ENCODE measurements at regions of chr14 and their contacts with region 1.

Region 1: GRCh38 chr14:103833711-103834110 is 13.7 kb downstream of the PPP1R13B start:
- DNase-seq: no peak
- ATAC-seq: no peak
- H3K4me3 ChIP-seq: no peak overlapping the region
- H3K4me3 Mint-ChIP-seq: no peak overlapping the region
- H3K27ac ChIP-seq: no peak overlapping the region
- H3K27ac Mint-ChIP-seq: no peak overlapping the region
- H3K4me1 ChIP-seq: no peaks in the 10 kb centered on the region
- H3K4me1 Mint-ChIP-seq: peaks cover 4% of the 10 kb centered on the region
- H3K27me3 ChIP-seq: no peaks in the 10 kb centered on the region
- H3K27me3 Mint-ChIP-seq: no peaks in the 10 kb centered on the region
- CTCF ChIP-seq: no peak

Region 2: DNA sequence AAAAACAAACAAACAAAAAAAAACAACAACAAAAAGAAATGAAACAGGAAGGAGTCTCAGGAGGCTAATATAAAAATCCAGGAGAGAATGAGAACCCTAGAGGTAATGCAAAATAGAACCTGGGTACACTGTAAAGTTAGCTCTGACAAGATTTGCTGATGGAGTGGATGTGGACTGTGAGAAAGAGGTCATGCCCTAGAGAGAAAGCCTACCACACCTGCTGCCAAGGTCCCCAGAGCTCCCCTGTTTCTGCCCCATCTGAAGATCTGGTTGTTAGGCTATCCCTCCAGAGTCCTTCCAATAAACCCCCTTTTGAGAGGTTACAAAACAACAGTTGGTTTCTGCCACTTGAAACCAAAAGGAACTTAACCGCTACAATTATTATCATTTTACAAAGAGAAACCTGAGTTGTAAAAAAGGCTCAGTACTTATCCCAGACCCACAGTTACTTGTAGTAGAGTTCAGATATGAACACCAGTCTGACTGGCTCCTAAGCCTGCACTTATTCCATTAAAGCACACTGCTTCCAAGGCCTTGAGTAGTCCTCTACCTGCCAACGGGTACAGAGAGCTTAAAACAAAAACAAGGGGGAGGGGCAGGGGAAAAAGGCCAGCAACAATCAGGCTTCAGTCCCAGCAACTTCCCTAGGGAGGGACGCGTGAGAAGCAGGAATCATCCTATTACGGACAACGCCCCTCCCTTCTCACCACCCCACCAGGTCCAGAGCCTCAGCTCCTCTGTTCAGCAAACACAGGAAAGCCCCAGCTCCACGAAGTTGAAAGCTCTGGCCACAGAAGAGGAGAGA is 14.0 kb before region 1 on chr14:
- CTCF ChIA-PET with region 1: no interaction called
- POLR2A ChIA-PET with region 1: interaction called, 10 read pairs
- intact Hi-C with region 1: no loop called
- DNase-seq: no peak
- ATAC-seq: no peak
- H3K4me3 ChIP-seq: no peak overlapping the region
- H3K4me3 Mint-ChIP-seq: no peak overlapping the region
- H3K27ac ChIP-seq: no peak overlapping the region
- H3K27ac Mint-ChIP-seq: no peak overlapping the region
- H3K4me1 ChIP-seq: peaks cover 16 to 18% of the 10 kb centered on the region in 2 donors
- H3K4me1 Mint-ChIP-seq: peaks cover 36% of the 10 kb centered on the region
- H3K27me3 ChIP-seq: no peaks in the 10 kb centered on the region
- H3K27me3 Mint-ChIP-seq: no peaks in the 10 kb centered on the region
- CTCF ChIP-seq: no peak